ENCODE measurements at regions of chr6 and their contacts with region 1.

Region 1: GRCh38 chr6:38034274-38034914 is 214.9 kb downstream of the ZFAND3 start:
- DNase-seq: no peak
- ATAC-seq: peak in 1 of 4 donors; percentile 44
- H3K4me3 ChIP-seq: no peak overlapping the region
- H3K27ac ChIP-seq: no peak overlapping the region
- H3K4me1 ChIP-seq: peaks cover 48% of the 10 kb centered on the region
- H3K27me3 ChIP-seq: no peaks in the 10 kb centered on the region
- CTCF ChIP-seq: peak; percentile 37

Region 2: GRCh38 chr6:38119516-38119915 is 85.1 kb after region 1 on chr6:
- intact Hi-C with region 1: no loop called
- DNase-seq: no peak
- ATAC-seq: no peak
- H3K4me3 ChIP-seq: no peak overlapping the region
- H3K27ac ChIP-seq: no peak overlapping the region
- H3K4me1 ChIP-seq: no peaks in the 10 kb centered on the region
- H3K27me3 ChIP-seq: no peaks in the 10 kb centered on the region
- CTCF ChIP-seq: no peak

Region 3: GRCh38 chr6:38671885-38672467 is 637.6 kb after region 1 on chr6:
- intact Hi-C with region 1: loop called in 1 of 2 experiments (anchors 10 kb)
- DNase-seq: no peak
- ATAC-seq: peak in 3 of 4 donors; percentile 56 to 78 (median 68)
- H3K4me3 ChIP-seq: no peak overlapping the region
- H3K27ac ChIP-seq: no peak overlapping the region
- H3K4me1 ChIP-seq: no peaks in the 10 kb centered on the region
- H3K27me3 ChIP-seq: no peaks in the 10 kb centered on the region
- CTCF ChIP-seq: peak; percentile 69